ENCODE measurements at regions of chr12 and their contacts with region 1.

Region 1: GRCh38 chr12:38906482-38907170 is 1.2 kb upstream of the CPNE8 start:
- DNase-seq: peak; percentile 76
- H3K4me3 Mint-ChIP-seq: peak overlapping the region; percentile 83
- H3K27ac Mint-ChIP-seq: peak overlapping the region; percentile 86
- H3K4me1 Mint-ChIP-seq: peaks cover 22% of the 10 kb centered on the region
- H3K27me3 Mint-ChIP-seq: peaks cover 31% of the 10 kb centered on the region

Region 2: GRCh38 chr12:38316391-38317129 is 590.1 kb before region 1 on chr12 and contains the start of gene ALG10B:
- CTCF ChIA-PET with region 1: no interaction called
- intact Hi-C with region 1: loop called (anchors 1 kb)
- DNase-seq: peak; percentile 95
- H3K4me3 Mint-ChIP-seq: peak within 1 kb of the TSS; percentile 93
- H3K27ac Mint-ChIP-seq: peak within 1 kb of the TSS; percentile 91
- H3K4me1 Mint-ChIP-seq: peaks cover 22% of the 10 kb centered on the region
- H3K27me3 Mint-ChIP-seq: no peaks in the 10 kb centered on the region
- total RNA-seq, gene ALG10B: 16.6 to 17.1 TPM

Region 3: DNA sequence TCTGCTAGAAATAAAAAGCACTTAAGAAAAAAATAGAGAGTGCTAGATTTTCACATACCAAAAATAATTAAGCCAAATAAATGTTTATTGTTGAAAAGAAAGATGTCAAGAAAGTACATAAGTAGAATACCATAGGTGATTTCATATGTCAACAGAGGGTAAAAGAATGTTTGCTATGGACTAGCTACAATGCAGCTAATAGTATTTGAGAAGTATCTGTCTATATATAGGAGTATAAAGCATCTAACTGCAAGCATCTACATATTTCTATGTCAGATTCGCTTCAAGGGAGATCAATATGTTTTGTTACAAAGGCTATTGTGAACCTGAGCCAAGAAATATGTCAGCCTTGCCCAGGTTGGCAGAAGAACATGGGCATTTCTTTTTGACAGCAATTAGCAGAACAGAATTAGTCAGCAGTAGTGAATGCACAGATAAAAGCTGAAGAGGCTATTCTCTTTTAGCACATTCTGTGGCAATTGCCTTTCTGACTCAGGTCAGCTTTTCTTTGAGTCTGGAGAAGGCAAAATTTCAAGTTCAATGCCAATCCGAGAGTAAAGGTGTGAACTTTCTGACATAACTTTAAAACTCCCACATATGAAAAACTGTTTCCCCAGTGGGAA is 450.0 kb before region 1 on chr12:
- CTCF ChIA-PET with region 1: no interaction called
- intact Hi-C with region 1: no loop called
- DNase-seq: no peak
- H3K4me3 Mint-ChIP-seq: no peak overlapping the region
- H3K27ac Mint-ChIP-seq: no peak overlapping the region
- H3K4me1 Mint-ChIP-seq: no peaks in the 10 kb centered on the region
- H3K27me3 Mint-ChIP-seq: no peaks in the 10 kb centered on the region

Region 4: GRCh38 chr12:38664661-38665269 is 241.9 kb before region 1 on chr12:
- CTCF ChIA-PET with region 1: no interaction called
- intact Hi-C with region 1: loop called (anchors 5 kb)
- DNase-seq: no peak
- H3K4me3 Mint-ChIP-seq: no peak overlapping the region
- H3K27ac Mint-ChIP-seq: no peak overlapping the region
- H3K4me1 Mint-ChIP-seq: no peaks in the 10 kb centered on the region
- H3K27me3 Mint-ChIP-seq: no peaks in the 10 kb centered on the region

Region 5: GRCh38 chr12:38771871-38772270 is 134.8 kb before region 1 on chr12:
- CTCF ChIA-PET with region 1: interaction called, 3 read pairs
- intact Hi-C with region 1: loop called (anchors 2 kb)
- DNase-seq: peak; percentile 34
- H3K4me3 Mint-ChIP-seq: no peak overlapping the region
- H3K27ac Mint-ChIP-seq: no peak overlapping the region
- H3K4me1 Mint-ChIP-seq: peaks cover 6% of the 10 kb centered on the region
- H3K27me3 Mint-ChIP-seq: no peaks in the 10 kb centered on the region

Region 6: GRCh38 chr12:38892090-38892786 is 14.4 kb before region 1 on chr12:
- CTCF ChIA-PET with region 1: interaction called, 8 read pairs
- intact Hi-C with region 1: loop called (anchors 1 kb)
- DNase-seq: peak; percentile 5
- H3K4me3 Mint-ChIP-seq: no peak overlapping the region
- H3K27ac Mint-ChIP-seq: no peak overlapping the region
- H3K4me1 Mint-ChIP-seq: peaks cover 8% of the 10 kb centered on the region
- H3K27me3 Mint-ChIP-seq: no peaks in the 10 kb centered on the region

Region 7: DNA sequence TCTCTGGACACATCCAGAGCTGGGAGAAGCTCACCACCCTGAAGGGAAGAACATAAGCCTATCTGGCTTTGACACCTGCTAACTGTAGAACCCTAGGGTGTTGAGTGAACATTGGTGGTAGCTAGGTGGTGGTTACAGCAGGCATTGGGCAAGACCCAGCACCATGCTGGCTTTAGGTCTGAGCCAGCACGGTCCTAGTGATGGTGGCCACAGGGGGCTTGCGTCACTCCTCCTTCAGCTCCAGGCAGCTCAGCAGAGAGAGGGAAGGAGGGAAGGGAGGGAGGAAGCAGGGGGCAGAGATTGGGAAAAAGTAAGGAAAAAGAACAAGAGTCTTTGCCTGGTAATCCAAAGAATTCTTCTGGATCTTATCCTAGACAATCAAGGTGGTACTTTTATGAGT is 113.6 kb after region 1 on chr12:
- CTCF ChIA-PET with region 1: no interaction called
- intact Hi-C with region 1: no loop called
- DNase-seq: no peak
- H3K4me3 Mint-ChIP-seq: no peak overlapping the region
- H3K27ac Mint-ChIP-seq: no peak overlapping the region
- H3K4me1 Mint-ChIP-seq: no peaks in the 10 kb centered on the region
- H3K27me3 Mint-ChIP-seq: no peaks in the 10 kb centered on the region